ENCODE measurements at regions of chr2 and their contacts with region 1.

Region 1: GRCh38 chr2:218659258-218659987 is at the starts of genes BCS1L and ZNF142:
- DNase-seq: peak; percentile 45
- H3K4me3 ChIP-seq: peak within 1 kb of the TSS; percentile 89
- H3K27me3 ChIP-seq: no peaks in the 10 kb centered on the region
- CTCF ChIP-seq: no peak
- polyA plus RNA-seq, gene BCS1L: 34.1 and 49.0 TPM in 2 replicates
- polyA plus RNA-seq, gene ZNF142: 2.9 and 7.1 TPM in 2 replicates

Region 2: DNA sequence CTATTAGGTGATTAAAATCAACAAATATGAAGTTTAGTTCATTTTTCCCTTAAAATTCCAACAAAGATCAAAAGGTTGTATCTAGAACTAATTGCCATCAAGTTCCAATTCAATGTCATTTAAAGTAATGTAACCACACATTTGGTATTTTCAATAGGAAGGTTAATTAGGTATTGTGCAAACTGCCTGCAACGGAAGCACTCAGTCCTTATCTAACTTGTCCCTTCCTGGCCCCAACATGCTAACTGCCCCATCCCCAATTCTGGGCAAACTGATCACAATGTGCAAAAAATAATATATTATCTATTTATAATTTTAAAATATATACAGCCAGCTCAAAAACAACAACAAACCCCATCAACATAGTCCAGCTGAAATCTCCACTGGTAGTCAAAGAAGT is 207.3 kb before region 1 on chr2:
- CTCF ChIA-PET with region 1: no interaction called
- POLR2A ChIA-PET with region 1: no interaction called
- DNase-seq: no peak
- H3K4me3 ChIP-seq: no peak overlapping the region
- H3K27me3 ChIP-seq: no peaks in the 10 kb centered on the region
- CTCF ChIP-seq: no peak

Region 3: GRCh38 chr2:218648088-218648786 is 11.2 kb before region 1 on chr2:
- CTCF ChIA-PET with region 1: interaction called, 24 read pairs
- POLR2A ChIA-PET with region 1: no interaction called
- DNase-seq: no peak
- H3K4me3 ChIP-seq: no peak overlapping the region
- H3K27me3 ChIP-seq: no peaks in the 10 kb centered on the region
- CTCF ChIP-seq: peak; percentile 89

Region 4: DNA sequence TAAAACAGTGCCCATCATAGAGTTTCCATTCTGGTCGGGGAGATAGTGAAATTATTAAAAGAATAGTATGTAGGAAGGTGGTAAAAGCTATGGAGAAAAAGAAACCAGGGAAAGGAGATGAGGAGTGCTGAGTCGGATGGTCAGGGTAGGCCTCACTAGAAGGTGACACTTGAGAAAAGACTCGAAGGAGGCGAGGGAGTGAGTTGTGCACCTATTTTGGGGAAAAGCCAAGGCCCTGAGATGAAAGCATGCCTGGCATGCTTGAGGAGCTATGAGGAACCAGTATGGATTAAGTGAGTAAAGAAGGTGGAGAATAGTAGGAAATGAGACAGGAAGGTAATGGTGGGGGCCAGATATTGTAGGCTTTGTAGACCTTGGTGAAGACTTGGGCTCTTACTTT is 43.9 kb after region 1 on chr2:
- CTCF ChIA-PET with region 1: no interaction called
- POLR2A ChIA-PET with region 1: no interaction called
- DNase-seq: no peak
- H3K4me3 ChIP-seq: no peak overlapping the region
- H3K27me3 ChIP-seq: no peaks in the 10 kb centered on the region
- CTCF ChIP-seq: no peak

Measured in BJ (cell line).